ENCODE measurements at regions of chr15 and their contacts with region 1.

Region 1: GRCh38 chr15:51842852-51843737 is 13.6 kb downstream of the TMOD3 start:
- DNase-seq: peak; percentile 48 to 57
- H3K4me3 ChIP-seq: no peak overlapping the region
- H3K27ac ChIP-seq: peak overlapping the region; percentile 98
- H3K4me1 ChIP-seq: peaks cover 60% of the 10 kb centered on the region
- H3K27me3 ChIP-seq: no peaks in the 10 kb centered on the region
- CTCF ChIP-seq: no peak

Region 2: GRCh38 chr15:51829360-51830275 is 13.5 kb before region 1 on chr15 and contains the start of gene TMOD3:
- CTCF ChIA-PET with region 1: interaction called, 3 read pairs
- POLR2A ChIA-PET with region 1: interaction called, 8 read pairs
- intact Hi-C with region 1: loop called (anchors 1 kb)
- DNase-seq: peak; percentile 77 to 91
- H3K4me3 ChIP-seq: peak within 1 kb of the TSS; percentile 71
- H3K27ac ChIP-seq: peak within 1 kb of the TSS; percentile 97
- H3K4me1 ChIP-seq: peaks cover 69% of the 10 kb centered on the region
- H3K27me3 ChIP-seq: no peaks in the 10 kb centered on the region
- CTCF ChIP-seq: no peak
- total RNA-seq, gene TMOD3: 94.9 and 125 TPM in 2 replicates

Region 3: DNA sequence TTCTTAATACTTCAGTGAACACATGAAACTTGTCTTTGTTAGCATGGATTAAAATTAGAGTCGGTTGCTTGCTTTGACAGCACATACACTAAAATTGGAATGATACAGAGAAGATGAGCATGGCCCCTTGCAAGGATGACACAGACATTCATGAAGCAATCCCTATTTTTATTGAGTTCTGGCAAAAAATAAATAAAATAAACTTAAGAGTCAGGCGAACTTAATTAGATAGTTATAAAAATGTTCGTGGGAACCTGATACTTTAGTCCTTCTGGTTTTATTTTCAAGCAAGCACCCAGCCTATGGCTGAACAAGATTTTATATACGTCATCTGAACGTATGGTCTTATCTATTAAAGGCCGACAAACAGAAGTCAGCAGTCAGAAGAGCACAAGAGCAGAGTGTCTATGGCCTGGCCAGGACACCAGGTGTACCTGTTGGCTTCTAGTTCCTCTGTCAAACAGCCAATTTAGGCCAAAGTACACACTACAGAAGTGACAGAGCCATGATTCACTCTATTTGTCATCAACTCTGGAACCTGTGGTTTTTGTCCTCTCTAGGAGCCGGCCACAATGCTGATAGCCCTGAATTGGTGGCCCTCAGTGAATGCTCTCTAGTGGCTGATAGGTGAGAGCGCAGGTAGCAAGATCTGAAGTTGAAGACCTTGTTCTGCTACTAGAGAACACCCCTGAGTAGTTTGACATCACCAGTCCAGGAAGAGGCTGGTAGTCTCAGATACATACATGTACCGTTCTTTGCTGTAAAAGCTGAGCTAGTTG is 64.2 kb after region 1 on chr15:
- CTCF ChIA-PET with region 1: interaction called, 11 read pairs
- POLR2A ChIA-PET with region 1: no interaction called
- intact Hi-C with region 1: loop called (anchors 1 kb)
- DNase-seq: peak; percentile 83 to 97
- H3K4me3 ChIP-seq: peak overlapping the region; percentile 26; the same call in 1 of the 2 replicates
- H3K27ac ChIP-seq: peak overlapping the region; percentile 69
- H3K4me1 ChIP-seq: peaks cover 27% of the 10 kb centered on the region
- H3K27me3 ChIP-seq: no peaks in the 10 kb centered on the region
- CTCF ChIP-seq: peak; percentile 60

Region 4: GRCh38 chr15:52078876-52079700 is 236.0 kb after region 1 on chr15:
- CTCF ChIA-PET with region 1: no interaction called
- POLR2A ChIA-PET with region 1: interaction called, 16 read pairs
- intact Hi-C with region 1: no loop called
- DNase-seq: peak in 1 of 2 experiments; percentile 60
- H3K4me3 ChIP-seq: no peak overlapping the region
- H3K27ac ChIP-seq: no peak overlapping the region
- H3K4me1 ChIP-seq: peaks cover 9% of the 10 kb centered on the region; the same call in 1 of the 2 replicates
- H3K27me3 ChIP-seq: no peaks in the 10 kb centered on the region
- CTCF ChIP-seq: peak; percentile 78

Region 5: DNA sequence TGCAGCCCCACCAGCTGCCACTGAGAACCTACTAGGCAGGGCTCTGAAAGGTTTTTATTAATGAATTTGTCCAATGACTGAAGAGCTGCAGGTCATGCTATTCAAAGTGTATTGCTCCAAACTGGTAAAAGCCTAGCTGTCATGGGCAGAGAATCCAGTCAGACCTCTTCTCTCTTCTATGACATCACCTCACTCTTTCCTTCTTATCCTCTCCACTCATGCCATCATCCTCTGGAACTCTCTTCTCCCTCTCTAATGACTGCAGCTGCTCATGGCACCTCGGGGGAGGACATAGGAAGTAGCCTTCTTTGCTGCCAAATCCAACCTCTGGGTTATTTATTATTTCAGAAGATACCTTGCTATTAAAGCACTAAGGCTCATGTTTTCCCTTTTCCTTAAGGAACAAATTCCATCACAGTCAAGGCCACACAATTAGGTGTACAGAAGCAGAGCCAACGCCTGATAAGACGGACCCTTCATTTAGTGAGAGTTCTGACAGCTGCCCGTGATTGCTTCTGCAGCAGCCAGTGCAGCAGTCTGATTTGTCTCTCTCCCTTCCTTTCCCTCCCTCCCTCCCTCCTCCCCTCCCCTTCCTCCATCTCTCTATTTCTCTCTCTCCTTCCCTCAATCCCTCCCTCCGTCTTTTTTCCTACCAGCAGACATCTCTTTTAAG is 1034.0 kb after region 1 on chr15:
- CTCF ChIA-PET with region 1: no interaction called
- POLR2A ChIA-PET with region 1: no interaction called
- intact Hi-C with region 1: no loop called
- DNase-seq: no peak
- H3K4me3 ChIP-seq: no peak overlapping the region
- H3K27ac ChIP-seq: no peak overlapping the region
- H3K4me1 ChIP-seq: no peaks in the 10 kb centered on the region
- H3K27me3 ChIP-seq: peaks cover 11% of the 10 kb centered on the region; the same call in 1 of the 2 replicates
- CTCF ChIP-seq: no peak